Psoas muscle (tissue), 8 donors: ENCODE measurements at regions of chr11 and their contacts with region 1.

Region 1: GRCh38 chr11:123301696-123302400 is 106.8 kb upstream of the CLMP start:
- DNase-seq: peak; percentile 55 to 74
- ATAC-seq: peak; percentile 84 to 93 (median 89)
- H3K4me3 ChIP-seq: peak overlapping the region; percentile 68
- H3K27ac ChIP-seq: no peak overlapping the region
- H3K4me1 ChIP-seq: peaks cover 16% of the 10 kb centered on the region
- H3K27me3 ChIP-seq: no peaks in the 10 kb centered on the region
- CTCF ChIP-seq: peak; percentile 91

Region 2: DNA sequence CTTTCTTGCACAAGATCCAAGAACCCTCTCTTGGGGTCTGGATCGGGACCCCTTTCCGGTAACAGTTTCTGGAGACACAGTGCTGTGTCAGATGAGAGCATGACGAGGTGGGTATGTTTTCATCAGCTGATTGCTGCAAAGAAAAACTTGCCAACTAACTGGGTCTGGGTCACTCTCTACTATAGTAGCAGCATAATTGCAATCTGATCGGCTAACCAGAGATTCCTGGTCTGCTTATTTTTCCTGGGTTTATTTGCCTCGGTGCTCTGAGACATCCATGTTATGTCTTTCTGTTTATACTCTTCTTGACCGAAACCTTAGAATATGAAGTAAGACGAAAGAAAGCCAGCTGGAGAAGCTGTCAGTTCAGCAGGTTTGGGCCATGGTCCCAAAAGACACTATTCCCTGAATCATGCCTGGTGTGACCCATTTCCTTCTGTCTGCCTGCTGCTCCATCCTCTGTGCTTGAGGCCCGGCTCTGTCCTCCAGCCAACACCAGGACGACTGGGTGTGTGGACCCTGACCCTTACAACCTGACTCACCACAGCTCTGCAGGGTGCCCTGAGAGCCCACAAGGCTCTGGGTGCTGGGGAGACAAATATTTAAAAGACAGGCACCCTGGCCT is 82.7 kb before region 1 on chr11:
- intact Hi-C with region 1: no loop called
- DNase-seq: no peak
- ATAC-seq: no peak
- H3K4me3 ChIP-seq: no peak overlapping the region
- H3K27ac ChIP-seq: no peak overlapping the region
- H3K4me1 ChIP-seq: no peaks in the 10 kb centered on the region
- H3K27me3 ChIP-seq: peaks cover 0 to 5% (median 2%) of the 10 kb centered on the region in 3 donors
- CTCF ChIP-seq: no peak

Region 3: DNA sequence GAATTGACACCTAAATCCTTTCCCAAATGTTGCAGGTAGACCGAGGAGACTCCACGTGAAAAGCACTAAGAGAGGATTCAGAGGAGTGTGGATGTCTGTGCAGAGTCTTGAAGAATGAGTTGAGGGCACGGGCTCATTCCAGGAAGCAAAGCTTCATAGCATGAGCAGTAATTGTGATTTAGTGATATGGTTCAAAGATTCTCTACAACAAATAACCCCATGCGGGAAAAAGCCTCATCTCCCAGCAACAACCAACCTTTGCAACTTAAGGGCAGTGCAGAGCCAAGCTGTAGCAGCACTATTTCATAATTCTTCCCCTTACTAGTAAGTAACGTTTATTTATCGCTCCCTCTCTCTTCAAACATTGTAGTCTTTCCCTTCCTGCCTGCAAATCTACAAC is 19.3 kb before region 1 on chr11:
- intact Hi-C with region 1: no loop called
- DNase-seq: no peak
- ATAC-seq: no peak
- H3K4me3 ChIP-seq: no peak overlapping the region
- H3K27ac ChIP-seq: no peak overlapping the region
- H3K4me1 ChIP-seq: no peaks in the 10 kb centered on the region
- H3K27me3 ChIP-seq: peaks cover 0 to 1% (median 0%) of the 10 kb centered on the region in 3 donors
- CTCF ChIP-seq: no peak

Region 4: GRCh38 chr11:123338330-123339005 is 36.6 kb after region 1 on chr11:
- intact Hi-C with region 1: loop called in 1 of 2 experiments (anchors 5 kb)
- DNase-seq: no peak
- ATAC-seq: no peak
- H3K4me3 ChIP-seq: no peak overlapping the region
- H3K27ac ChIP-seq: no peak overlapping the region
- H3K4me1 ChIP-seq: no peaks in the 10 kb centered on the region
- H3K27me3 ChIP-seq: no peaks in the 10 kb centered on the region
- CTCF ChIP-seq: no peak

Region 5: GRCh38 chr11:123344790-123345357 is 43.0 kb after region 1 on chr11:
- intact Hi-C with region 1: loop called in 1 of 2 experiments (anchors 1 kb)
- DNase-seq: no peak
- ATAC-seq: peak in 1 of 4 donors; percentile 58
- H3K4me3 ChIP-seq: no peak overlapping the region
- H3K27ac ChIP-seq: no peak overlapping the region
- H3K4me1 ChIP-seq: peaks cover 5% of the 10 kb centered on the region
- H3K27me3 ChIP-seq: no peaks in the 10 kb centered on the region
- CTCF ChIP-seq: no peak

Region 6: GRCh38 chr11:123357961-123358841 is 56.4 kb after region 1 on chr11:
- intact Hi-C with region 1: loop called (anchors 5 kb)
- DNase-seq: peak in 1 of 2 donors; percentile 56
- ATAC-seq: peak; percentile 56 to 81 (median 66)
- H3K4me3 ChIP-seq: peak overlapping the region; percentile 62
- H3K27ac ChIP-seq: no peak overlapping the region
- H3K4me1 ChIP-seq: no peaks in the 10 kb centered on the region
- H3K27me3 ChIP-seq: peaks cover 0 to 22% (median 2%) of the 10 kb centered on the region in 3 donors
- CTCF ChIP-seq: peak; percentile 23

Region 7: GRCh38 chr11:123407130-123407995 is 105.5 kb after region 1 on chr11:
- intact Hi-C with region 1: loop called (anchors 5 to 10 kb)
- DNase-seq: peak; percentile 34 to 59
- ATAC-seq: peak; percentile 87 to 93 (median 89)
- H3K4me3 ChIP-seq: no peak overlapping the region
- H3K27ac ChIP-seq: no peak overlapping the region
- H3K4me1 ChIP-seq: no peaks in the 10 kb centered on the region
- H3K27me3 ChIP-seq: no peaks in the 10 kb centered on the region
- CTCF ChIP-seq: peak; percentile 75

Region 8: GRCh38 chr11:123478352-123478987 is 176.6 kb after region 1 on chr11:
- intact Hi-C with region 1: loop called (anchors 1 to 5 kb)
- DNase-seq: peak; percentile 30 to 67
- ATAC-seq: peak; percentile 61 to 87 (median 74)
- H3K4me3 ChIP-seq: no peak overlapping the region
- H3K27ac ChIP-seq: no peak overlapping the region
- H3K4me1 ChIP-seq: peaks cover 21% of the 10 kb centered on the region
- H3K27me3 ChIP-seq: no peaks in the 10 kb centered on the region
- CTCF ChIP-seq: peak; percentile 75